ENCODE measurements at regions of chr10 and their contacts with region 1.

Region 1: GRCh38 chr10:29386342-29386999 is 97.6 kb downstream of the LYZL1 start:
- DNase-seq: peak; percentile 8 to 17 (median 16)
- H3K4me3 ChIP-seq: no peak overlapping the region
- H3K4me3 Mint-ChIP-seq: no peak overlapping the region
- H3K27ac ChIP-seq: no peak overlapping the region
- H3K27ac Mint-ChIP-seq: no peak overlapping the region
- H3K4me1 ChIP-seq: no peaks in the 10 kb centered on the region
- H3K4me1 Mint-ChIP-seq: peaks cover 3% of the 10 kb centered on the region
- H3K27me3 ChIP-seq: no peaks in the 10 kb centered on the region
- H3K27me3 Mint-ChIP-seq: peaks cover 4 to 8% (median 7%) of the 10 kb centered on the region in 3 donors
- CTCF ChIP-seq: peak; percentile 87

Region 2: DNA sequence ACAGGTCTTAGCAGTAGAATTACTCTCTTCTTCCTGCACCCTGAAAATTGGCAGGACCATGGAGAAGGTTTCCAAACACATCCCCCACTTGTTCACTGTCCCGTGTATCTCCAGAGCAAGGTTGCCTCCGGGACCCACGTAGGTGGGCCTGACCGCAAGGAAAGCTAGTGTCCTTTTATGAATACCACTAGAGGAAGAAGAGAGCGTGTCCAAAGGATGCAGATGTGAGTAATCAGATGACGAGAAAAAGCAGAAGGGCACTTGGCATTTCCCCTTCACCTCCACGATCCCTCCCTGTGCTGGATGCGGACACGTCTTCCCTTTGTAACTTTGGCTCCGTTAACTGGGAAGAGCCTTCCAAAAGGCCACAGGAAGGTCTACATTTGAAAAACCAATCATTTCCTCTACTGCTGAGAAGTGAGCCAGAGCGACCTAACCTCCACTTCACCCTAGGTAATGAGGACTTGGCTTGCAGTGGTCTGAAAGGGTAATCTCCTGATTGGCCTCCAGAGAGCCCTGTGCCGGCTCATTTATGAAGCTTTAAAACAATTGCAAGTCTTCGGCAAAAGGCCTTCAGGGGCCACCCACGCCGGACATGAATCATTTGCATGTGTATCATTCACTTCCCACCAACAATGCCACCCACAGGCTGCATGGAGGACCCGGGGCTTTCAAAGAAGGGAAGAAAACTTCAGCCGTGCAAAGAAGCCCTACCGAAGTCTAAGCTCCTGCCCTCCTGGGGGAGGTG is 42.2 kb before region 1 on chr10:
- intact Hi-C with region 1: no loop called
- DNase-seq: peak in 1 of 3 donors; percentile 36
- H3K4me3 ChIP-seq: no peak overlapping the region
- H3K4me3 Mint-ChIP-seq: peak overlapping the region in 1 of 2 donors; percentile 2
- H3K27ac ChIP-seq: no peak overlapping the region
- H3K27ac Mint-ChIP-seq: peak overlapping the region in 1 of 7 donors; percentile 40
- H3K4me1 ChIP-seq: no peaks in the 10 kb centered on the region
- H3K4me1 Mint-ChIP-seq: peaks cover 4% of the 10 kb centered on the region
- H3K27me3 ChIP-seq: no peaks in the 10 kb centered on the region
- H3K27me3 Mint-ChIP-seq: peaks cover 2 to 9% (median 5%) of the 10 kb centered on the region in 3 donors
- CTCF ChIP-seq: no peak

Region 3: DNA sequence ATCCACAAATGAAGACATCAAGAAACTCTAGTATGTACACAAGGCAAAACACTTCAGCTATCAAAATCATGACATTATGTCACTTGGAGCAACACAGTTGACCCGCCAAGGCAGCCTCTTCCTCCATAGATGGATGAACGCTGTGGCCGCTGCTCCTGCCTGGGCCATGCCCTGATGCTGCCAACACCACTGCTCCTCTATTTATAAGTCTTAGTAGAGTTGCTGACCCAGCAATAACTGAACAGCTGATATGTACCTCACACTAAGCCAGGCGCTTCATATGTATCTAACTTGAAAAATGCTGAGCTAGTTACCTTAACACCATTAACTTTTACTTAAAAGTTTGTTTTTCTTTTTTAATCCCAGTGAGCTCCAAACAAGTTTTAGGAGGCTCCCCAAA is 34.3 kb after region 1 on chr10:
- intact Hi-C with region 1: no loop called
- DNase-seq: no peak
- H3K4me3 ChIP-seq: no peak overlapping the region
- H3K4me3 Mint-ChIP-seq: no peak overlapping the region
- H3K27ac ChIP-seq: no peak overlapping the region
- H3K27ac Mint-ChIP-seq: no peak overlapping the region
- H3K4me1 ChIP-seq: no peaks in the 10 kb centered on the region
- H3K4me1 Mint-ChIP-seq: no peaks in the 10 kb centered on the region
- H3K27me3 ChIP-seq: no peaks in the 10 kb centered on the region
- H3K27me3 Mint-ChIP-seq: no peaks in the 10 kb centered on the region
- CTCF ChIP-seq: no peak

Region 4: DNA sequence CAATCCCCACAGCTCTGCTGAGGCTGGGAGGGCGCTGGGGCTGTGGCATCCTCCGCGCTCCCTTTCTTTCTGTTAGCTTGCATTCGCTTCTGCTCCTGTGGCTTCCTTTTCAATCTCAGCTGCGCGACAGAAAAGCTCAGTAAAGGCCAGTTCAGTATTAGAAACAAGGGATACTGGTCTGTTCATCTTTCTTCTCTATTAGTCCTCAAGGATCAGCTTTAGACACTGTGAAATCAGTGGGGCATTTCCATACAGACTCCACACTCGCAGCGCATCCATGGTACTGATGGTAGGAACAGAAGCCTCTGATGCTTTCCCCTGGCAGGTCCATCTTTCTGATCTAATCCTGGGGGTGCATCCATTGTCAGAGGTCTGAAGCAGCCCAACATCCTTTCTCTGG is 66.1 kb after region 1 on chr10:
- intact Hi-C with region 1: loop called in 1 of 2 experiments (anchors 5 kb)
- DNase-seq: no peak
- H3K4me3 ChIP-seq: no peak overlapping the region
- H3K4me3 Mint-ChIP-seq: no peak overlapping the region
- H3K27ac ChIP-seq: no peak overlapping the region
- H3K27ac Mint-ChIP-seq: peak overlapping the region in 1 of 7 donors; percentile 28
- H3K4me1 ChIP-seq: peaks cover 0 to 3% of the 10 kb centered on the region in 2 donors
- H3K4me1 Mint-ChIP-seq: peaks cover 7% of the 10 kb centered on the region
- H3K27me3 ChIP-seq: no peaks in the 10 kb centered on the region
- H3K27me3 Mint-ChIP-seq: no peaks in the 10 kb centered on the region
- CTCF ChIP-seq: no peak

Measured in CD14-positive monocyte (primary cell).